GM12878 (cell line): ENCODE measurements at regions of chr9 and their contacts with region 1.

Region 1: GRCh38 chr9:130770679-130771442 is 64.2 kb upstream of the ABL1 start:
- DNase-seq: no peak
- ATAC-seq: peak; percentile 83
- H3K4me3 ChIP-seq: no peak overlapping the region
- H3K27ac ChIP-seq: no peak overlapping the region
- H3K4me1 ChIP-seq: peaks cover 27% of the 10 kb centered on the region
- H3K27me3 ChIP-seq: no peaks in the 10 kb centered on the region
- CTCF ChIP-seq: peak; percentile 55 to 58 (median 55)
- EP300 ChIP-seq: no peak
- POLR2A ChIP-seq: no peak
- RAD21 ChIP-seq: peak; percentile 85

Region 2: DNA sequence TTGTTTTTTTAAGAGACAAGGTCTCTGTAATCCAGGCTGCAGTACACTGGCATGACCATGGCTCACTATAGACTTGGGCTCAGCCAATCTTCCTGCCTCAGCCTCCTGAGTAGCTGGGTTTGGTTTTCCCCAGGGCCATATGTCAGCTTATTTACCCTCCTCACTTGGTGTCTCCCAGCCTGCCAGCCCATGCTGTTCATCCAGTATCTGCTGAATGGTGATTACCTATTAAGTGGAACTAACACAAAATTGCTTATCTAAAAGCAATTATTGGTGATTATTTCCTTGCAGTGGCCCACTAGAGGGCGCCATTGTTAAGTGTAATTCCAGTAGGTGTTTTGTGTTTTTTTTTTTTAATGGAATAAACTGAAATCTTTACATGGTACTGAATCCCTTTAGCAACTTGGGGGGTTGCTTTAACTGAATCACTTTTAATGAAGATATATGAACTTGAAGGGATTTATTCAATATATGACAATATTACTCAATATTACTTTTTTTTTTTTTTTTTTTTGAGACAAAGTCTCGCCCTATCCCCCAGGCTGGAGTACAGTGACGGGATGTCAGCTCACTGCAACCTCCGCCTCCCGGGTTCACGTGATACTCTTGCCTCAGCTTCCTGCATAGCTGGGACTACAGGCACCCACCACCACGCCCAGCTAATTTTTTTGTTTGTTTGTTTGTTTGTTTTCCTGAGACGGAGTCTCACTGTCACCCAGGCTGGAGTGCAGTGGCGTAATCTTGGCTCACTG is 63.5 kb before region 1 on chr9:
- CTCF ChIA-PET with region 1: interaction called, 22 read pairs
- POLR2A ChIA-PET with region 1: interaction called, 3 read pairs
- RAD21 ChIA-PET with region 1: interaction called, 10 read pairs
- SMC1A ChIA-PET with region 1: interaction called, 14 read pairs
- in situ Hi-C with region 1: no loop called
- intact Hi-C with region 1: no loop called
- DNase-seq: no peak
- ATAC-seq: peak; percentile 70
- H3K4me3 ChIP-seq: no peak overlapping the region
- H3K27ac ChIP-seq: no peak overlapping the region
- H3K4me1 ChIP-seq: no peaks in the 10 kb centered on the region
- H3K27me3 ChIP-seq: no peaks in the 10 kb centered on the region
- CTCF ChIP-seq: peak; percentile 47 to 81 (median 73)
- EP300 ChIP-seq: no peak
- POLR2A ChIP-seq: no peak
- RAD21 ChIP-seq: peak; percentile 84

Region 3: DNA sequence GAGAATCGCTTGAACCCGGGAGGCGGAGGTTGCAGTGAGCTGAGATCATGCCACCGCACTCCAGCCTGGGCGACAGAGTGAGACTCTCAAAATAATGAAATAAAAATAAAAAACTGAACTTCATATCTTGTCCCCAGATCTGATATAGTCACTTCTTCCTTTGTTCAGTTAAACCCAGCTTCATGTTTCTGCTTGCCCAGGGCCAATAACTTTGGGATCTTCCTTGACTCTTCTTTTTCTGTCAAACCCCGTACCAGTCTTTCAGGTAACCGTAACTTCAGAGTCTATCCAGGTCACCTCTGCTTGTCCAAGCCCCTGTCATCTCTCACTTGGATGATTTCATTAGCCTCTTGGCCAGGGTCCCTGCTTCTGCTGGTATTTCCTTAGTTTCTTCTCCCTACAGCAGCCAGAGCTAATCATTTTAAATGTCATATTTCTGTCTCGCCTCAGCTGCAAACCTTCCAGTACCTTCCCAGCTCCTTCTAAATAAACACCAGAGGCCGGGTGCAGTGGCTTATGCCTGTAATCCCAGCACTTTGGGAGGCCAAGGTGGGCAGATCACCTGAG is 44.5 kb after region 1 on chr9:
- CTCF ChIA-PET with region 1: interaction called, 4 read pairs
- POLR2A ChIA-PET with region 1: no interaction called
- RAD21 ChIA-PET with region 1: no interaction called
- SMC1A ChIA-PET with region 1: interaction called, 5 read pairs
- in situ Hi-C with region 1: no loop called
- intact Hi-C with region 1: loop called (anchors 5 kb)
- DNase-seq: no peak
- ATAC-seq: no peak
- H3K4me3 ChIP-seq: no peak overlapping the region
- H3K27ac ChIP-seq: no peak overlapping the region
- H3K4me1 ChIP-seq: peaks cover 7% of the 10 kb centered on the region
- H3K27me3 ChIP-seq: no peaks in the 10 kb centered on the region
- CTCF ChIP-seq: no peak
- EP300 ChIP-seq: no peak
- POLR2A ChIP-seq: no peak
- RAD21 ChIP-seq: no peak

Region 4: DNA sequence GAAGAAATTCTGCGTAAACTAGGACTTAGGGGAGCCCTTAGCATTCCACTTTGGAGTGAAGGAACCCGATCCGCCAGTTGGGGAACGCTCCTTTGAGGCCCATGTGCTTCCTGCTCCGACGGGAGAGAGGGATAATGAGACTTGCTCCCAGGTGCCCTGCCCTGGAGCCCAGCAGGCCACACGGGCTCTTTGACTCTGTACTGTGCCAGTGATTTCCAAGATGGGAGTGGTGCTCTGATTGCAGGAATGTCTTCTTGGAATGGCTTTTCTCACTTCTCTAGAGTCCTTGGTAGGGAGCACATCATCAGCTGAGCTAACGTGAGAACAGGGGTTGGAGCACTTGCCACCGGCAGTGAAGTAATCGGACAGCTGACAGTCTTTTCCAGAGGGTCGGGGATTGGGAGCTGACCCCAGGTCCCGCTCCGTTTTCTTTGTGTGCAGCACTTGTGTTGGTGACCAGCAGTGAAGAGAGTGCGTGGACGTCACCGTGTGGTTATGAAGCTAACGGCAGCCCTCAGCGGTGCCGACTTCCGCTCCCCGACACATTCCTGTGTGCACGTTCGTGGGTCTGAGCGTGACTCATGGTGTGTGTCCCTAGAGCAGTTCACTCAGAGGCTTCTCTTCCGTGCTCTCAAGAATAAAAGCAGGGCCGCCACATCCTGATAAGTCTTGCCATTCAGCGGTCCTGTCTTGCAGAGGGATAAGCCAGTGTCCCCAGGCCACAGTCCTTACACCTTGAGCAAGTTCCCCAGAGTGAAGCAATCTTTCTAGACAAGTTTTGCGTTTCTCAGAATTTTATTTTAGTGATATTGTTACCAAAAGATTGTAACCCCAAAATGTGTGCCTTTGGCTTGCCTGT is 89.8 kb after region 1 on chr9:
- CTCF ChIA-PET with region 1: interaction called, 190 read pairs
- POLR2A ChIA-PET with region 1: no interaction called
- RAD21 ChIA-PET with region 1: interaction called, 28 read pairs
- SMC1A ChIA-PET with region 1: interaction called, 25 read pairs
- in situ Hi-C with region 1: loop called (anchors 5 kb)
- intact Hi-C with region 1: loop called (anchors 1 kb)
- DNase-seq: no peak
- ATAC-seq: no peak
- H3K4me3 ChIP-seq: no peak overlapping the region
- H3K27ac ChIP-seq: no peak overlapping the region
- H3K4me1 ChIP-seq: no peaks in the 10 kb centered on the region
- H3K27me3 ChIP-seq: no peaks in the 10 kb centered on the region
- CTCF ChIP-seq: no peak
- EP300 ChIP-seq: no peak
- POLR2A ChIP-seq: no peak
- RAD21 ChIP-seq: no peak

Region 5: GRCh38 chr9:130940693-130941576 is 170.1 kb after region 1 on chr9:
- CTCF ChIA-PET with region 1: interaction called, 3 read pairs
- POLR2A ChIA-PET with region 1: no interaction called
- RAD21 ChIA-PET with region 1: no interaction called
- SMC1A ChIA-PET with region 1: no interaction called
- in situ Hi-C with region 1: loop called (anchors 5 kb)
- intact Hi-C with region 1: loop called (anchors 1 kb)
- DNase-seq: no peak
- ATAC-seq: peak; percentile 91
- H3K4me3 ChIP-seq: no peak overlapping the region
- H3K27ac ChIP-seq: no peak overlapping the region
- H3K4me1 ChIP-seq: no peaks in the 10 kb centered on the region; the same call in 1 of the 2 replicates
- H3K27me3 ChIP-seq: peaks cover 6 to 21% of the 10 kb centered on the region in 2 experiments
- CTCF ChIP-seq: peak; percentile 86 to 96 (median 95)
- EP300 ChIP-seq: no peak
- POLR2A ChIP-seq: no peak
- RAD21 ChIP-seq: peak; percentile 82

Region 6: GRCh38 chr9:131087354-131087893 is 316.6 kb after region 1 on chr9:
- CTCF ChIA-PET with region 1: no interaction called
- POLR2A ChIA-PET with region 1: no interaction called
- RAD21 ChIA-PET with region 1: no interaction called
- SMC1A ChIA-PET with region 1: no interaction called
- in situ Hi-C with region 1: no loop called
- intact Hi-C with region 1: no loop called
- DNase-seq: no peak
- ATAC-seq: no peak
- H3K4me3 ChIP-seq: no peak overlapping the region
- H3K27ac ChIP-seq: no peak overlapping the region
- H3K4me1 ChIP-seq: no peaks in the 10 kb centered on the region
- H3K27me3 ChIP-seq: no peaks in the 10 kb centered on the region; a peak in 1 of 4 replicates
- CTCF ChIP-seq: no peak
- EP300 ChIP-seq: no peak
- POLR2A ChIP-seq: no peak
- RAD21 ChIP-seq: no peak